ENCODE measurements at regions of chr2 and their contacts with region 1.

Region 1: DNA sequence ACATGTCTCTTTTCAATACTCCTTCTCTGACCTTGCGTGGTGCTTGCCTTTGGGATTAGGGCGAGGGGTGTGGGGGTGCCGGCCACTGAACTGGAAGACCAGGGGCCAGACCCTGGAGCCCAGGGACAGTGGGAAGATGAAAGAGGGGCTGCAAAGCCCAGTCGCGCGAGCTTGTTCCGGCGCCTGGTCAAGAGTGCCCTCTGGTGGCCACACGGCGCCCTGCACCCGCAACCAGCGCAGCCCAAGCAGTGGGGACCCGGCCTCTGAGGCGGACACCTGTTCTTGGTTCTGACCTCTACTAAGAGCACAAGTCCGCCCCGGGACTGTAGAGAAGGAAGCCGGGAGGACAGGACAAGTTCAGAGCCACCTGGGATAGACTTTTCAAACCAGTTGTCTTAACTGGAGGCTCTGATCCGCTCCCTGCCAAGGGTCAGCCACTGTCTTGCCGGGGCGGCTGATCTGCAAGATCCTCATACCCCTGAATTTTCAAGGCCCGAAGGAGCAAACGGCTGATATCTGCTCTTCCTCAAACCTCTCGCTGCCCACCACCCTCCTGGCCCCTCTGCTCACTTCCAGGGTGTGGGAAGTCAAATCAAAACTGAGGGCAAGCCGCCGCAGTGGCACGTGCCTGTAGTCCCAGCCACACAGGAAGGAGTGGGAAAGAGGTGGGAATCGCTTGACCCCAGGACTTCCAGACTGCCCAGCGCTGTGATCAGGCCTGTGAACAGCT is 14.9 kb upstream of the MSH6 start:
- DNase-seq: no peak
- ATAC-seq: peak; percentile 91
- H3K4me3 ChIP-seq: no peak overlapping the region
- H3K27ac ChIP-seq: no peak overlapping the region
- H3K4me1 ChIP-seq: no peaks in the 10 kb centered on the region
- H3K27me3 ChIP-seq: no peaks in the 10 kb centered on the region
- CTCF ChIP-seq: peak; percentile 99

Region 2: DNA sequence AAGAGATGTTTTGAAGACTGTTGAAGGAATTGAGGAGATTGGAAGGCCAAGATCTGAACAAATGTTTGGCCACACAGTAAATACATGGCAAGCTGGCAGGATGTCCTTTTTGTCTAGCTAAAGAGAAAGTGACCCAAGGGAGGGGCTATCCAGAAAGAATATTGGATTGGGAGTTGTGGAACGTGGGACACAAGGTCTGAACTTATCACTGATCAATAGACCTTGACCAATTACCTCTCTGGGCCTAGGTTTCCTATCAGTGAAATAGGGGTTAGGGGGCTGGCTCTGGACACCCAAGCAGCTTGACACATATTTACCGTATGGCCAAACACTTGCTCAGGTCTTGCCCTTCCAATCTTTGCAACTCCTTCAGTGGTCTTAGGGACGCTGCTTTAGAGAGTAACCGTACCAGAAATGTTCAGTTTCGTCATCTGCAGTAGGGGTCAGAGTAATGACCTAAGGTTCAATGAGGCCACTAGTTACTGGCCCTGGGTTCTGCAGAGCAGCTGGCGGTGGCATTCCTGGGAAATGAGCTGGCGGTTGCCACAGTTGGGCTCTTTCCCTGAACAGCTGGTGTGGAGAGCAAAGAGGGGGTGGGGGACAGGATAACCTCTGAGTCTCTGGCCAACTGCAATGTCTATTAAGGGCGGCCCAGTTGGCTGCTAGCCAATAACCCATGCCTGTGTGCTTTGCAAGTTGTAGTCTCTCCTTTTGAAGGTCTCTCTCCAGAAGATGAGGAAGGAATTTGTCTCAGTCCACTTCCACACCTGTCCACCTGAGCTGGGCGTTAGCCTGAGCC is 542.8 kb before region 1 on chr2:
- CTCF ChIA-PET with region 1: no interaction called
- POLR2A ChIA-PET with region 1: no interaction called
- in situ Hi-C with region 1: no loop called
- intact Hi-C with region 1: no loop called
- DNase-seq: peak; percentile 41
- ATAC-seq: peak; percentile 88
- H3K4me3 ChIP-seq: no peak overlapping the region
- H3K27ac ChIP-seq: peak overlapping the region; percentile 87
- H3K4me1 ChIP-seq: peaks cover 48% of the 10 kb centered on the region
- H3K27me3 ChIP-seq: no peaks in the 10 kb centered on the region
- CTCF ChIP-seq: no peak

Region 3: DNA sequence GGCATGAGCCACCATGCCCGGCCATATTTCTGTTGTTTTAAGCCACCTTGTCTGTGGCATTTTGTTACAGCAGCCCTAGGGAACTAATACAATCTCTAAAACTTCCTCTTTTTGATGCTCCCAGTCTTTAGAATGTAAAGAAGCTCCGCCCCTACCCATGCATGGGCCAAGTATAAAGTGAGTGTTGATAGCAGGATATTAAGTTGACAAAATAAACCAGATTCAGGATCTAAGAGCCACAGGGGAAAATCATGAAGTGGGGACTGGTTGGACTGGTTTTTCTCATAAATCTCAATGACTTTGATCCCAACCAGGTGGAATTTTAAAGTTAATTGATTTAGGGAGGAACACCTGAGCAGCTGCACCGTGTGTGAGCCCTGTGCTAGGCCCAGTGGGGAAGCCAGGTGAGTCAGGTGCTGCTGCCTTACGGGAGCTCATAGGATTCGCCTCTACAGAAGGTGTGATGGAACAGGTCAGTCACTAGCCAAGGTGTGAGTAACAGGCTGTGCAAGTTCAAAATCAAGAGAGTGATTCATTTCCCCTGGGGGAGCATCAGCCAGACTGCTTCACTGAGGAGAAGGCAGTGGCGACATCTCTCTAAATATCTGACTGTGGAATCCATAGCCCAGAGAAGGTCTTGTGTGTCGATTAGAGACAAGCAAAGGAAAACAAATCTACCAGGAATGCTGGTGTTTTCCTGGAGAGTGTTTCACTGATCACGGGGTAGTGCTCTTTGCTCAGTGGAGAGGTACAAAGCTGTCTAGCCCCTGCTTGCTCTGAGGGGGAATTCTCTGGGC is 428.1 kb before region 1 on chr2:
- CTCF ChIA-PET with region 1: interaction called, 10 read pairs
- POLR2A ChIA-PET with region 1: no interaction called
- in situ Hi-C with region 1: no loop called
- intact Hi-C with region 1: loop called (anchors 5 kb)
- DNase-seq: no peak
- ATAC-seq: no peak
- H3K4me3 ChIP-seq: no peak overlapping the region
- H3K27ac ChIP-seq: no peak overlapping the region
- H3K4me1 ChIP-seq: no peaks in the 10 kb centered on the region
- H3K27me3 ChIP-seq: no peaks in the 10 kb centered on the region
- CTCF ChIP-seq: no peak

Region 4: GRCh38 chr2:47437287-47437686 is 330.8 kb before region 1 on chr2:
- CTCF ChIA-PET with region 1: interaction called, 5 read pairs
- POLR2A ChIA-PET with region 1: interaction called, 7 read pairs
- in situ Hi-C with region 1: no loop called
- intact Hi-C with region 1: loop called (anchors 5 kb)
- DNase-seq: no peak
- ATAC-seq: no peak
- H3K4me3 ChIP-seq: no peak overlapping the region
- H3K27ac ChIP-seq: no peak overlapping the region
- H3K4me1 ChIP-seq: no peaks in the 10 kb centered on the region
- H3K27me3 ChIP-seq: no peaks in the 10 kb centered on the region
- CTCF ChIP-seq: no peak

Region 5: GRCh38 chr2:47512581-47513083 is 255.4 kb before region 1 on chr2:
- CTCF ChIA-PET with region 1: no interaction called
- POLR2A ChIA-PET with region 1: no interaction called
- in situ Hi-C with region 1: no loop called
- intact Hi-C with region 1: loop called (anchors 10 kb)
- DNase-seq: no peak
- ATAC-seq: no peak
- H3K4me3 ChIP-seq: no peak overlapping the region
- H3K27ac ChIP-seq: no peak overlapping the region
- H3K4me1 ChIP-seq: no peaks in the 10 kb centered on the region
- H3K27me3 ChIP-seq: no peaks in the 10 kb centered on the region
- CTCF ChIP-seq: no peak

Region 6: DNA sequence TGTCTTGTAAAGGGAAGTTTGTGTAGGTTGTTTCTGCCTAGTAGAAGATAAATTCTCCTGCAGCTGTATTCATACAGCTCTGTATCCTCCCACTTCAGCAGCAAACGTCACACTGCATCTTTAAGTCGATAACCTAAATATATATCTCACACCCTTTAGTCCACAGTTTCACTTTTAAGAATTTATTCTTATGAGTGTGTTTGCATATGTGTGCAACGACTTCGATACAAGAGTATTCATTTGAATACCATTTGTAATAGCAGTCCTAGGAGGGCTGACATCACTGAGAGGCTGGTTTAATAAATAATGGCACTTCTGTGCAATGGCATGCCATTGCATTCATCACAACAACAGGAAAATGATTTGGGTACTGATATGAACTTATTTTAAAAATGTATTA is 48.9 kb before region 1 on chr2:
- CTCF ChIA-PET with region 1: no interaction called
- POLR2A ChIA-PET with region 1: no interaction called
- in situ Hi-C with region 1: no loop called
- intact Hi-C with region 1: no loop called
- DNase-seq: no peak
- ATAC-seq: no peak
- H3K4me3 ChIP-seq: no peak overlapping the region
- H3K27ac ChIP-seq: no peak overlapping the region
- H3K4me1 ChIP-seq: no peaks in the 10 kb centered on the region
- H3K27me3 ChIP-seq: no peaks in the 10 kb centered on the region
- CTCF ChIP-seq: no peak

Measured in Panc1 (cell line).